ENCODE measurements at regions of chr16 and their contacts with region 1.

Region 1: GRCh38 chr16:87636072-87636684 is 33.9 kb downstream of the JPH3 start:
- DNase-seq: peak; percentile 69 to 92 (median 80)
- ATAC-seq: peak; percentile 81 to 87
- H3K4me3 Mint-ChIP-seq: peak overlapping the region; percentile 83 to 91 (median 89)
- H3K27ac Mint-ChIP-seq: peak overlapping the region; percentile 19 to 97 (median 92)
- H3K4me1 Mint-ChIP-seq: peaks cover 4 to 22% (median 21%) of the 10 kb centered on the region in 4 donors
- H3K27me3 Mint-ChIP-seq: peaks cover 0 to 8% (median 0%) of the 10 kb centered on the region in 5 donors

Region 2: DNA sequence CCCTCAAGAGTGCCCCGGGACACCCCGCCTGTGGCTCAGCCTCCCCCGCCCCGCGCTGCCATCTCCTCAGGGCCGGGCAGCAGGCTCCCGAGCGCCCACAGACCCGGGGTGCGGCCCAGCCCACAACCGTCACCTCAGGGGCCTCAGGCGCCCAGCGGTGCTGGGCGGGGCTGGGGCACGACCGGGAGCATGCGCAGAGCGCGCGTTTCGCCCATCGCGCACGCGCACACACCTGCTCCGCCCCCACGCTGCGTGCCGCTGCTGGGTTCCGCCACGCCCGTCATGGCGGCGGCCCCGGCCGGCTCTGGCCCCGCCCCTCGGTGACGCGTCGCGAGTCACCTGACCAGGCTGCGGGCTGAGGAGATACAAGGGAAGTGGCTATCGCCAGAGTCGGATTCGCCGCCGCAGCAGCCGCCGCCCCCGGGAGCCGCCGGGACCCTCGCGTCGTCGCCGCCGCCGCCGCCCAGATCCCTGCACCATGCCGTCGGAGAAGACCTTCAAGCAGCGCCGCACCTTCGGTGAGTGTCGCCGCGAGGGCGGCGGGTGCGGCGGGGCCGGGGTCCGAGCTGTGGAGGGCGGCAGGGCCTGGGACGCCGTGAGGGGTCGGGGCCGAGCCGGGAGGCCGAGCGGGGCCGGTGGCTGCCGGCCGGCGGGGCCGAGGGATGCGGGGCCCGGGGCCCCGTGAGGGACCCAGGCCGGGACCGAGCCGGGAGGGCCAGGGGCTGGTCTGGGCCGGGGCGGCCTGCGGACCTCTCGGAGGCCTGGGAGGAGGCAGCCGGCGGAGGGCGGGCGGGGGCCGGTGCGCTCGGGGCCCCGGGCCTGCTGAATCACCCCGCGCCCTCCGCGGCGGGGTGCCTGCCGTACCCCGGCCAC is 244.0 kb before region 1 on chr16 and contains the start of gene MAP1LC3B:
- POLR2A ChIA-PET with region 1: interaction called, 12 read pairs
- DNase-seq: peak; percentile 96 to 100 (median 98)
- ATAC-seq: peak; percentile 71 to 74
- H3K4me3 Mint-ChIP-seq: peak within 1 kb of the TSS; percentile 76 to 96 (median 94)
- H3K27ac Mint-ChIP-seq: peak within 1 kb of the TSS; percentile 72 to 97 (median 94)
- H3K4me1 Mint-ChIP-seq: peaks cover 27 to 63% (median 61%) of the 10 kb centered on the region in 4 donors
- H3K27me3 Mint-ChIP-seq: no peaks in the 10 kb centered on the region
- polyA plus RNA-seq, gene MAP1LC3B: 89.9 to 117 (median 90.3) TPM

Region 3: GRCh38 chr16:87653234-87653633 is 17.1 kb after region 1 on chr16:
- POLR2A ChIA-PET with region 1: no interaction called
- DNase-seq: no peak
- ATAC-seq: peak in 1 of 2 donors; percentile 39
- H3K4me3 Mint-ChIP-seq: no peak overlapping the region
- H3K27ac Mint-ChIP-seq: no peak overlapping the region
- H3K4me1 Mint-ChIP-seq: no peaks in the 10 kb centered on the region
- H3K27me3 Mint-ChIP-seq: peaks cover under 1 to 8% (median 2%) of the 10 kb centered on the region in 5 donors

Region 4: GRCh38 chr16:87678618-87679017 is 42.4 kb after region 1 on chr16:
- POLR2A ChIA-PET with region 1: no interaction called
- DNase-seq: no peak
- ATAC-seq: no peak
- H3K4me3 Mint-ChIP-seq: no peak overlapping the region
- H3K27ac Mint-ChIP-seq: peak overlapping the region in 1 of 10 donors; percentile 34
- H3K4me1 Mint-ChIP-seq: peaks cover 0 to 10% (median 7%) of the 10 kb centered on the region in 4 donors
- H3K27me3 Mint-ChIP-seq: peaks cover 0 to 12% (median 6%) of the 10 kb centered on the region in 5 donors

Region 5: DNA sequence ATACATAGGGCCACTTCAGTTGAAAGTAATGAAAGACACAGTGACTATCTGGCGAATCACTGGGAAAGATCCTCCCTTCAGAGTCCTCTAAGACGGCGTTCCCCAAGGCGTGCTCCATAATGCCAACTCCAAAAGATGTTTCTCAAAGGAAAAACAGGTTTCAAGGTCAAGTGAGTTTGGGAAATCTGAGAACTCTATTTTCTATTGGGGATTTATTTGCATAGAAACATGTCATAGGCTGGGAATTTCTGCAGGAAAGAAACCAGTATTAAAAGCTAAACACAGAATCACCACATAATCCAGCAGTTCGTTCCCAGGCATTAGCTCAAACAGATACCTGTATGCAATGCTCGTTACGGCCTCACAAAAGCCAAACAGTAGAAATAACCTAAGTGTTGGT is 121.7 kb after region 1 on chr16:
- POLR2A ChIA-PET with region 1: no interaction called
- DNase-seq: no peak
- ATAC-seq: no peak
- H3K4me3 Mint-ChIP-seq: no peak overlapping the region
- H3K27ac Mint-ChIP-seq: peak overlapping the region in 3 of 10 donors; percentile 6 to 41 (median 29)
- H3K4me1 Mint-ChIP-seq: peaks cover 18 to 54% (median 33%) of the 10 kb centered on the region in 4 donors
- H3K27me3 Mint-ChIP-seq: no peaks in the 10 kb centered on the region